ENCODE measurements at regions of chr1 and their contacts with region 1.

Region 1: DNA sequence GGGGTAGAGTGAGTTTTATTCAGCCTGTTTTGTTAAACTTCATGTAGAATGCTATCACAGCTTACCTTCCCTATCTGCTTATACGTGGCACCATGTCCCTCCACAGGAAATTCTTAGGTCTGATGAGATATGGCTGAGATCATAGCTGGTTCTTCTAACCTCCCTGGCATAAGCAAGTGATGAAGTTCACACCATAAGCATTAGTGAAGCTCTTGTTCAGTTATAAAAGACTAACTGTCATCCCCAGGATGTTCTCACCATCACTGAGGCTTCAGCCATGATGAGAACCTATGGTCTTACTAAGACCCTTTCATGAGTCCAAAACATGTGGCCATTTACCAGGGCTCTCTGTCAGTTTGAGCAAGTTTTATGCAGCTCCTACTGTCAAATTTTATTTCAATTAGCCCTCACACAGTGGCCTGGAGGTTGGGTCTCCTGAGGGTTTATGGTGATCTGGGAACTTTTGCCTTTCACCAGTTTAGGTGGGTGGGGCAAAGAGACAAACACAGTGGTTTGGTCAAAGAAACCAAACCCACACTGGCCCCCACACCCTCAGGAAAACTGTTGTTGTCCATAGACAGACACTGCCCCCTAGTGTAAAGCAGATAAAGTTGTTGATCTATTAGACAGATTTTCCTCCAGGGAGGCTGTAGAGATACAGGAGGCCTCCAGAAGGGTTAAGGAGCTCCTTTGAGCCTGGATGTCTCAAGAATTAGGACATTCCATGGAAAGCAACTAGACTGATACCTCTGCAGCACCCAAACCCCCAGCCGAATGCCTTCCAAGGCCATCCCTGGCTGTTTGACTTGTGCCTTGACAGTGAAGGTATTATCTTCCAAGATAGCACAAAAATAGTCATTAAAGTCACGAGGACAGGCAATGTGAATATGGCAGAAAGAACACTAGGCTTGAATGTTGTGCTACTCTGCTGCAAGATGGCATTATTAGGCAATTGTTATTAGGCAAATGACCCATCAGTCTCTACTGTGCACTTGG is 5.0 kb downstream of the SLC22A15 start:
- DNase-seq: no peak
- H3K4me3 ChIP-seq: no peak overlapping the region
- H3K27me3 ChIP-seq: no peaks in the 10 kb centered on the region
- CTCF ChIP-seq: peak; percentile 73

Region 2: GRCh38 chr1:115802416-115802815 is 178.9 kb before region 1 on chr1:
- CTCF ChIA-PET with region 1: interaction called, 39 read pairs
- POLR2A ChIA-PET with region 1: no interaction called
- DNase-seq: no peak
- H3K4me3 ChIP-seq: no peak overlapping the region
- H3K27me3 ChIP-seq: no peaks in the 10 kb centered on the region; the same call in 1 of the 2 replicates
- CTCF ChIP-seq: no peak

Region 3: GRCh38 chr1:115807723-115808122 is 173.6 kb before region 1 on chr1:
- CTCF ChIA-PET with region 1: interaction called, 39 read pairs
- POLR2A ChIA-PET with region 1: no interaction called
- DNase-seq: peak; percentile 18
- H3K4me3 ChIP-seq: no peak overlapping the region
- H3K27me3 ChIP-seq: no peaks in the 10 kb centered on the region; the same call in none of the 2 replicates
- CTCF ChIP-seq: peak; percentile 79

Region 4: GRCh38 chr1:115949156-115949555 is 32.1 kb before region 1 on chr1:
- CTCF ChIA-PET with region 1: no interaction called
- POLR2A ChIA-PET with region 1: no interaction called
- DNase-seq: no peak
- H3K4me3 ChIP-seq: no peak overlapping the region
- H3K27me3 ChIP-seq: no peaks in the 10 kb centered on the region
- CTCF ChIP-seq: no peak

Region 5: GRCh38 chr1:115991909-115992308 is 10.6 kb after region 1 on chr1:
- CTCF ChIA-PET with region 1: interaction called, 33 read pairs
- POLR2A ChIA-PET with region 1: no interaction called
- DNase-seq: no peak
- H3K4me3 ChIP-seq: no peak overlapping the region
- H3K27me3 ChIP-seq: no peaks in the 10 kb centered on the region
- CTCF ChIP-seq: no peak

Region 6: GRCh38 chr1:116001739-116002487 is 20.6 kb after region 1 on chr1:
- CTCF ChIA-PET with region 1: interaction called, 19 read pairs
- POLR2A ChIA-PET with region 1: no interaction called
- DNase-seq: no peak
- H3K4me3 ChIP-seq: no peak overlapping the region
- H3K27me3 ChIP-seq: no peaks in the 10 kb centered on the region
- CTCF ChIP-seq: no peak

Measured in BJ (cell line).